CD8-positive, alpha-beta T cell (primary cell): ENCODE measurements at regions of chr1 and their contacts with region 1.

Region 1: DNA sequence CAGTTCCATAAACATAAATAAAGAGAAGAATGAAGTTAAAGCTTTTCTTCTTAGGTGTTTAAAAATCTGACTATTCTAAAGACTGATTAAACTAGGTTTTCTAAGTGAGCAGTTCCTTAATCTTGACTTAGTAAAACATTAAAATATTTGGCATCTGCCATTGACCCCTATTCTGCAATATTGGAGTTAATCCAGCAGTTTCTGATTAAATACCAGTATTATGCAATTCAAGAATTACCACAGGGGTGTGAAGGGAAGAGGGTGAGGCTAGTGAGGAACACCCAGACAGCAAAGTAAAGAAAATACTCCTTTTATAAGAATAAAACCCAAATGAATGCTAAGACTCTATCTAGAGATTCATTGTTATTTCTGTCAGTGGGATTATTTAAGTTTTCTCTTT is 40.9 kb downstream of the CLIC4 start:
- DNase-seq: peak in 1 of 9 experiments; percentile 6
- ATAC-seq: no peak
- H3K4me3 ChIP-seq: no peak overlapping the region
- H3K4me3 Mint-ChIP-seq: no peak overlapping the region
- H3K27ac ChIP-seq: no peak overlapping the region
- H3K27ac Mint-ChIP-seq: no peak overlapping the region
- H3K4me1 ChIP-seq: no peaks in the 10 kb centered on the region
- H3K4me1 Mint-ChIP-seq: no peaks in the 10 kb centered on the region
- H3K27me3 ChIP-seq: no peaks in the 10 kb centered on the region
- H3K27me3 Mint-ChIP-seq: peaks cover 2% of the 10 kb centered on the region
- CTCF ChIP-seq: no peak

Region 2: DNA sequence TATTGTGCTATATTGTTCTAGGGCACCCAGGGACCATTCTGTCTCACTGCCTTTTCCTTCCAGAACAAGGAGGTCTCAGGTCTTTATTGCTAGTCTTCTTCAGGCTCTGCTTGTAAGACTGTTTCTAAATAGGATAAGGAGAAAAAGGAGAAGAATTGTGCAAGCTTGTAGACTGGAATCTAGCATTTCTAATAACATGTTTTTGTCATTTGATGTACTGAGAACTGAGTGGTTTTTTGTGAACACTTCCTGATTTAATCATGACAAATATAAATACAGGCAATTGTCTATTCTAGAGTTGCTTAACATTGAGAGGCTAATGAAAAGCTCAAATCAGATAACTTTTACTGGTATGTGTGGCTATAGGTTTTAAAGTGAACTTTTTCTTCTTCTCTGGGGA is 36.7 kb after region 1 on chr1:
- CTCF ChIA-PET with region 1: no interaction called
- POLR2A ChIA-PET with region 1: no interaction called
- intact Hi-C with region 1: loop called in 1 of 2 experiments (anchors 2 kb)
- DNase-seq: no peak
- ATAC-seq: no peak
- H3K4me3 ChIP-seq: no peak overlapping the region
- H3K4me3 Mint-ChIP-seq: no peak overlapping the region
- H3K27ac ChIP-seq: no peak overlapping the region
- H3K27ac Mint-ChIP-seq: no peak overlapping the region
- H3K4me1 ChIP-seq: no peaks in the 10 kb centered on the region
- H3K4me1 Mint-ChIP-seq: no peaks in the 10 kb centered on the region
- H3K27me3 ChIP-seq: peaks cover 0 to 3% of the 10 kb centered on the region in 2 experiments
- H3K27me3 Mint-ChIP-seq: peaks cover 6% of the 10 kb centered on the region
- CTCF ChIP-seq: no peak

Region 3: DNA sequence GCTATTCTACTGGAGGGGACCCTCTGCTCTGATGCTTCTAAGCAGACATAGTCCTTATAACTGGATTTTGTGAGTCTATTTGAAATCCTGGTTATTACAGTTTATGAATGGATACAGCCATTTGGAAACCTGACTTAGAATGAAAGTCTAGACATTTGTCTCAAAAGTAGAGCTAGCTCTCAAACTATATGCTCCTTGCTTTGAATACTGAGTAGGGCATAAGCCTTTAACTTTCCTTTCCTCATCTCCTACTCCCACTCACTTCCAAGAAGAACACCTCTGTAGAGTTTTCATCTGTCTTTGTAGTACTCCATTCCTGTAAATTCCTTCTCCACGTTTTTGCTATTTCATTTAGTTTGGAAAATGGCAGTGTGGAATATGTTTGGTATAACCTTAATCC is 1900.6 kb after region 1 on chr1:
- CTCF ChIA-PET with region 1: no interaction called
- POLR2A ChIA-PET with region 1: no interaction called
- intact Hi-C with region 1: no loop called
- DNase-seq: no peak
- ATAC-seq: no peak
- H3K4me3 ChIP-seq: no peak overlapping the region
- H3K4me3 Mint-ChIP-seq: no peak overlapping the region
- H3K27ac ChIP-seq: no peak overlapping the region
- H3K27ac Mint-ChIP-seq: no peak overlapping the region
- H3K4me1 ChIP-seq: peaks cover 8% of the 10 kb centered on the region
- H3K4me1 Mint-ChIP-seq: peaks cover 13% of the 10 kb centered on the region
- H3K27me3 ChIP-seq: no peaks in the 10 kb centered on the region
- H3K27me3 Mint-ChIP-seq: no peaks in the 10 kb centered on the region
- CTCF ChIP-seq: no peak